Sciatic nerve (tissue), 2 donors: ENCODE measurements at regions of chr20 and their contacts with region 1.

Region 1: GRCh38 chr20:33862709-33863403 is 51.7 kb downstream of the CHMP4B start:
- DNase-seq: peak; percentile 74
- ATAC-seq: peak; percentile 82

Region 2: GRCh38 chr20:33810885-33811777 is 51.7 kb before region 1 on chr20 and contains the start of gene CHMP4B:
- intact Hi-C with region 1: no loop called
- DNase-seq: peak; percentile 99
- ATAC-seq: peak; percentile 99
- total RNA-seq, gene CHMP4B: 72.8 TPM

Region 3: GRCh38 chr20:34069341-34070078 is 206.7 kb after region 1 on chr20:
- intact Hi-C with region 1: loop called (anchors 5 kb)
- DNase-seq: peak; percentile 86
- ATAC-seq: peak; percentile 90

Region 4: GRCh38 chr20:34129518-34130162 is 266.8 kb after region 1 on chr20:
- intact Hi-C with region 1: loop called (anchors 2 kb)
- DNase-seq: no peak
- ATAC-seq: peak; percentile 92